ENCODE measurements at regions of chr12 and their contacts with region 1.

Region 1: GRCh38 chr12:61487728-61488127 is 772.5 kb upstream of the USP15 start:
- DNase-seq: no peak
- H3K4me3 ChIP-seq: no peak overlapping the region
- H3K27ac ChIP-seq: no peak overlapping the region
- H3K4me1 ChIP-seq: no peaks in the 10 kb centered on the region
- H3K27me3 ChIP-seq: no peaks in the 10 kb centered on the region
- CTCF ChIP-seq: no peak

Region 2: DNA sequence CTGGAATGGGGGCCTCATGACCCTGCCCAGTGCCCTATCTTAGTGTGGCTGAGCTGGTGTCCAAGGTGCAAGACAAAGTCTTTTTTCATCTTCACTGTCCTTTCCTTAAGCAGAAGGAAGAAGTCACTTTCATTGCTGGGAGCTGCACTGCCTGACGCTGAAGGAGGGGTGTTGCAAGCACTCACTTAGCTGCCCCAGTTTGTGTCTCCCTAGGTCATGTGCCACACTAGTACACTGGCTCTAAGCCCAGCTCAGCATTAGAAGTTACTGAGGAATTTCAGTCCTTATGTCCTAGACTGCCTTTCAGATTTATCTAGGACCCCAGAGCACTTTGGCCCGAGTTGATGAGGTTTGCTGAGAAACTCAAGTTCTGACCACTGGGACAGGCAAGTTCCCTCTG is 179.5 kb before region 1 on chr12:
- CTCF ChIA-PET with region 1: no interaction called
- POLR2A ChIA-PET with region 1: no interaction called
- intact Hi-C with region 1: no loop called
- DNase-seq: no peak
- H3K4me3 ChIP-seq: no peak overlapping the region
- H3K27ac ChIP-seq: no peak overlapping the region
- H3K4me1 ChIP-seq: no peaks in the 10 kb centered on the region
- H3K27me3 ChIP-seq: no peaks in the 10 kb centered on the region
- CTCF ChIP-seq: no peak

Region 3: DNA sequence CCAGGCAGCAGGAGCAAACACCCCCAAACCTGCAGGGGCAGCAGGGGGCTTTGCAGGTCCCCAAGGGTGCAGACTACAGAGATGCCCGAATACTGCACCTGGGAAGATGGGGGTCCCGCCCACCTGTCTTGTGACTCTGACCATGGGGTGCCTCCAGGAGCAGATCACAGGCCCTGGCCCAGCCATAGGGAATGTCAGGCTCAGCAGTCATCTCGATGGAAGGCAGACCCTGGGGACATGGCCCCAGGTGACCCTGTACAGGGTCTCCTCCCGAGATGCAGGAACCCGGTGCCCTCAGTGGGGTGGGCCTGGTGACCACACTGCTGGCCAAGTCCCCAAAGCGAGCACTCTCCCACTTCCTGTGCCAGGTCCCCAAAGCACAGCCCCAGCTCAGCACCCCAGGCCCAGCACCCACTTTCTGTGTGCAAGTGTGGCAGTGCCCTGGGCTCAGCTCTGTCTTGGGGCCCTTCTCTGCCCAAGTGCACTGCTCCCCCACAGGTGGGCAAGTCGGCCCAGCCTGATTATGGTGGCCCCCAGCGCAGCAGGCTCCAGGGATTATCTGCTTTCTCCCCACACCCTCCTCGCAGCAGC is 131.2 kb before region 1 on chr12:
- CTCF ChIA-PET with region 1: no interaction called
- POLR2A ChIA-PET with region 1: no interaction called
- intact Hi-C with region 1: no loop called
- DNase-seq: no peak
- H3K4me3 ChIP-seq: no peak overlapping the region
- H3K27ac ChIP-seq: no peak overlapping the region
- H3K4me1 ChIP-seq: no peaks in the 10 kb centered on the region
- H3K27me3 ChIP-seq: no peaks in the 10 kb centered on the region
- CTCF ChIP-seq: no peak

Region 4: GRCh38 chr12:62032870-62033269 is 545.1 kb after region 1 on chr12:
- CTCF ChIA-PET with region 1: no interaction called
- POLR2A ChIA-PET with region 1: no interaction called
- intact Hi-C with region 1: loop called (anchors 5 kb)
- DNase-seq: no peak
- H3K4me3 ChIP-seq: no peak overlapping the region
- H3K27ac ChIP-seq: no peak overlapping the region
- H3K4me1 ChIP-seq: no peaks in the 10 kb centered on the region
- H3K27me3 ChIP-seq: no peaks in the 10 kb centered on the region
- CTCF ChIP-seq: no peak